Naive thymus-derived CD8-positive, alpha-beta T cell (primary cell): ENCODE measurements at regions of chr6 and their contacts with region 1.

Region 1: DNA sequence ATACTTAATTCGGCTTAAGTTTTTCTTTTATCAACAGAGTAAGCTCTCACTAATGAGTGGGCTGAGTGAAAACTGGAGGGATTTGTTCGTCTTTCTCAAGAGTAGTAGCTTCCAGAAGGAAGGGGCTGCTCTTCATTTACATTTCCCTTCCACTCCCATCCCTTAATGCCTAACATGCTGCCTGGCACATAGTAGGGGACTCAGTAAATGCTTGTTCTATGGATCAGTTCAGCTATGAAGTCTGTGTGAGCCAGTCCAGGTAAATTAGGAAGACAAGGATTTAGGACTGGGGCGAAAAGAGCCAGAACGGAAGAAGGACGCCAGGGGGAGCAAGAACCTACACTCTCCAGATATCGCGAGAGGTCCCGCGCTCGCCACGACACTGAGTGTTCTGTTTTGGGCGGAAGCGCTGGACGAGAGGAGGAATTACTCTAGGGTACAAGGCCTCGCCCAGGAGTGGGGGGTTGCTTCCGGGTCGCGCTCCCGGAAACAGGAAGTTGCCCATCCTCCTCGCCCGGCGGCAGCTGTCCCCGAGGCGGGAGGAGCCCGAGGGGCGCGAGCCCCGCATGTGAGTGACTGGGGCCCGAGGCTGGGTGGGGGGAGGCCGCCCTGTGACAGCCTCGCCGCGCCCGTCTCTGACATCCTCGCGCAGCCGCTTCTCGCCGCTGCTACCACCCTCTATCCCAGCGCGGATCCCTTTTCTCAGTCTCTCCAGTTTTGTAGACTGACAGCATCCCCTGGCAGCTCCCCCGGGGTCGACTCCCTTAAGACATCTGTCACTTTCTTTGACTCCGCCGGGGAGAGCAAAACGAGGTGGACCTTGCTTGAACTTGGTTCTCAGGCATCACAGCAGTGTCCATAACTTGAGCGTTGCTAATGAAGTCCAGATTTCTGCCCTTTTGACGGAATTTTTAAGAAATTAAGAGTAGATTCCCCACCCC is at the start of gene C6orf89:
- DNase-seq: peak; percentile 92 to 99 (median 97)
- ATAC-seq: peak; percentile 96 to 98
- H3K4me3 Mint-ChIP-seq: peak within 1 kb of the TSS; percentile 79 to 93 (median 89)
- H3K27ac Mint-ChIP-seq: peak within 1 kb of the TSS; percentile 90 to 98 (median 96)
- H3K4me1 Mint-ChIP-seq: peaks cover 17 to 44% (median 35%) of the 10 kb centered on the region in 4 donors
- H3K27me3 Mint-ChIP-seq: no peaks in the 10 kb centered on the region
- polyA plus RNA-seq, gene C6orf89: 37.4 to 44.4 (median 40.1) TPM

Region 2: DNA sequence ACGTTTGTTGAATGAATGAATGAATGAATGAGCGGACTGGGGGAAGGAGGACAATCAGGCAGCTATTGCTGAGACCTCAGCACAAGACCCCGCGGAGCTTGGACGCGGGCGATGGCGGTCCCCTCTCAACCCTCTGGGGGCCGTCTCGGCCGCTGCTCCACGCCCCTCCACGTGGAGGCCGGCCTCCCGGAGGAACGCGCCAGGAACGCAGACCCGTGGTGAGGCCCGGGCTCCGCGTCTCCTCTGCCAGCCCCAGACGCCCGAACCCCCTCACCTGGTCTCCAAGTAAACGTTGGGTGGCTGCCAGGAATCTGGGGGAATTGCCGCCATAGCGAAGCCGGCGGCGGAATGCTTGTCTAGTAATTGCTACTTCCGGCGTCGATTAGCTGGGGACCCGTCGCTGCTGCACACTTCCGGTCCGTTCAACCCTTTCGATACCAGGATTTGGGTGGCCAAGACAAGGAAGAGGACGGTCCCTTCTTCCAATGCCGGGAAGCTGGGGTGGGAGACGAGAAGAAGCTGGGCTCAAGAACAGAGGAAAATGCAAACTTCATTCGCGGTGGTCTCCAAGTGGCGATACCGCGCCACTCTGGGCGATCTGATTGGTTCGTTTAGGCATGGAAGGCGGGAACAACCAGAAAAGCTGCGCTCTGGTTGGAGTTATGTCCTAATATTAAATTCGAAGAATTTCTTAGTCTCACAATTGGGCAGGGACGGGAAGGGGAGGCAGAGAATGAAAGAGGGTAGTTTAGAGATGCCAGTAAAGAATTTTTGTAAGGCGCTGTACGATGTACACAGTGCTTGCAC is 11.1 kb before region 1 on chr6 and contains the start of gene PPIL1:
- POLR2A ChIA-PET with region 1: interaction called, 32 read pairs
- DNase-seq: peak; percentile 74 to 98 (median 87)
- ATAC-seq: peak; percentile 88 to 91
- H3K4me3 Mint-ChIP-seq: peak within 1 kb of the TSS; percentile 86 to 99 (median 98)
- H3K27ac Mint-ChIP-seq: peak within 1 kb of the TSS; percentile 94 to 100 (median 99)
- H3K4me1 Mint-ChIP-seq: peaks cover 16 to 43% (median 42%) of the 10 kb centered on the region in 4 donors
- H3K27me3 Mint-ChIP-seq: peaks cover 3 to 14% (median 7%) of the 10 kb centered on the region in 5 donors
- polyA plus RNA-seq, gene PPIL1: 27.1 to 34.2 (median 27.6) TPM

Region 3: DNA sequence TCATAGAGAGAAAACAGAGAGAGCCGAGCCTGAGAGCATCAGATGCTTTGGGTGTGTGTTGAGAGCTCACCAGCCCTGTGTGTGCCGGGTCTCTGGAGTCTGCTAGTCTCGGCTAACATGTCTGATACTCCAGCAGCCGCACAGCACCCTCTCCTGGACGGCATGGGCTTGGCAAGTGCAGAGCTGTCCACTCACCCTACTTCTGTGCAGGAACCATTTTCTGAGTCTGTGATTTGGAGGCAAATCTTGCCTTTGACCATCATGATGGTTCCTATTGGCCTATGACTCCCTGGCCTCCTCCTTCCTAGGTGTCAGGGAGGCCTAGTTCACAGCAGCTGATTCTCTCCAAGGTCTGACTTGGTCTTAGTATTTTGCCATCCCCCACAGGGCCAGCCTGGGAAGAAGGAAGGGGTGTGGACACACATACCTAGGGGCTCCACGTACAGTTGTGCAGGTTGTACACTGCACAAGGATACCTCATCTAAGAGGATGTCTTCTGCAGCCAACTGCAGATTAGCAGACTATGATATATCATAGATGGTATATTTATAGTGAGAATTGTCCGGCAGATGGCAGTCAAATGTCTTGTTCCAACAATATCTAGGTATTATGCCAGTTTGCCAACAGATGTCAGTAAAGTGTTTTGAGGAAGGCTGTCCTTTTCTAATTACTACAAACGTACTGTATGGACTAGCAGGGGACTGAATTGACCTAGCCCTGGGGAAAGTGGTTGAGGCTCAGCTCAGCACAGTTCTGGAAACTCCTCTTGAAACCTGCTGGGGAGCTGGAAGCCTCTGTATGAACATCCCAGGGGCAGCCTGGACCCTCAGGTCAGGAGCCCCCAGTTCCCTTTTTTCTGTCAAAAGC is 132.7 kb after region 1 on chr6:
- POLR2A ChIA-PET with region 1: interaction called, 18 read pairs
- DNase-seq: peak; percentile 68 to 92 (median 82)
- ATAC-seq: peak; percentile 93 to 95
- H3K4me3 Mint-ChIP-seq: no peak overlapping the region
- H3K27ac Mint-ChIP-seq: peak overlapping the region; percentile 17 to 92 (median 76)
- H3K4me1 Mint-ChIP-seq: peaks cover 27 to 47% (median 42%) of the 10 kb centered on the region in 4 donors
- H3K27me3 Mint-ChIP-seq: no peaks in the 10 kb centered on the region